Gastrocnemius medialis (tissue), 4 donors: ENCODE measurements at regions of chr4 and their contacts with region 1.

Region 1: GRCh38 chr4:1346781-1347409 is at the start of gene UVSSA:
- DNase-seq: peak; percentile 100
- ATAC-seq: peak; percentile 86 to 88
- H3K4me3 ChIP-seq: peak within 1 kb of the TSS; percentile 76 to 98 (median 88)
- H3K27ac ChIP-seq: peak within 1 kb of the TSS; percentile 88 to 99 (median 97)
- H3K4me1 ChIP-seq: peaks cover 20 to 31% of the 10 kb centered on the region in 2 donors
- H3K27me3 ChIP-seq: no peaks in the 10 kb centered on the region
- CTCF ChIP-seq: peak in 1 of 5 experiments; percentile 16
- POLR2A ChIP-seq: peak; percentile 92 to 97
- total RNA-seq, gene UVSSA: 8.5 to 13.2 (median 12.3) TPM

Region 2: DNA sequence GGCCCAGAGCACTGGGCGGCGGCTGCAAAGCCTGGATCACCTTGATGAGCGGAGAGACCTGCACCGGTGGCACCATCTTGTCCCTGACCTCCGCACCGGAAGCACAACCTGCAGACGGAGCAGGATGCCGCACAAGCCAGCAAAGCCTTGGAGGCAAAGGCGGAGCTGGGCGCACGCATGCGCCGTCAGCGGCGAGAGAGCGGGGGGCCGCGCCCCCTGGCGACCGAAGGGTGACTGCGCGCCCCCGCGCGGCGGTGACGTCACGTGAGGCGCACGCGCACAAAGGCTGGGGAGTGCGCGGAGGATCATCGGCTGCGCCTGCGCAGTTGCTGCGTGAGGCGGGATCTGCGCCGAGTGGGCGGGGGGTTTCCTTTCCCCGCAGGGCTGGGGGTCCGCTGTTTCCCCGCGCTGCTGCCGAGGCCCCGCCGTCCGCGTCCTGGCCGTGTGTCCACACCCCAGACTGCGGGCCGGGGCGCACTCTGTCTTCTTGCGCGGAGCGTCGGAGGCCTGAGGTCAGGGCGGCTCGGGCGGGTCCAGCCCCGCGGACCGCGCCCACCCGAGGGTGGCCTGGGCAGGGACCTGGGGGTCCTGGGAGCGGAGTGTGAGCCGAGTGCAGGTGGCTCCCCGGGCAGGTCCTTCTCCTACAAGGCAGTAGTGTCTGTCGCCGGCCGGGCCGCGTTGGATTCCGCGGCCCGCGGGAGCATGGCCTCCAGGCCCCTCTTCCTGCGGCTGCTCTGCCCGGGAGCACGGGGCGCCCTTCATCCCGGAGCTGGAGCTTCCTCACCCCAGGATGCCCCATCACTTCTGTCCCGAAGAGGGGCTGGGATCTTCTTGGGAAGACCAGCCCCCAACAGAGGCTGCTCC is 672.5 kb before region 1 on chr4 and contains the starts of genes ATP5ME and MYL5:
- in situ Hi-C with region 1: no loop called
- intact Hi-C with region 1: loop called (anchors 1 kb)
- DNase-seq: peak; percentile 94 to 96
- ATAC-seq: peak; percentile 91 to 94
- H3K4me3 ChIP-seq: peak within 1 kb of the TSS; percentile 88 to 99 (median 98)
- H3K27ac ChIP-seq: peak within 1 kb of the TSS; percentile 90 to 99 (median 97)
- H3K4me1 ChIP-seq: peaks cover 31 to 48% of the 10 kb centered on the region in 2 donors
- H3K27me3 ChIP-seq: peaks cover 0 to 5% (median 0%) of the 10 kb centered on the region in 3 donors
- CTCF ChIP-seq: peak; percentile 79 to 97 (median 88)
- POLR2A ChIP-seq: peak; percentile 79 to 93
- total RNA-seq, gene ATP5ME: 24.7 to 172 (median 91.5) TPM
- total RNA-seq, gene MYL5: 1.3 to 20.3 (median 3.6) TPM

Region 3: DNA sequence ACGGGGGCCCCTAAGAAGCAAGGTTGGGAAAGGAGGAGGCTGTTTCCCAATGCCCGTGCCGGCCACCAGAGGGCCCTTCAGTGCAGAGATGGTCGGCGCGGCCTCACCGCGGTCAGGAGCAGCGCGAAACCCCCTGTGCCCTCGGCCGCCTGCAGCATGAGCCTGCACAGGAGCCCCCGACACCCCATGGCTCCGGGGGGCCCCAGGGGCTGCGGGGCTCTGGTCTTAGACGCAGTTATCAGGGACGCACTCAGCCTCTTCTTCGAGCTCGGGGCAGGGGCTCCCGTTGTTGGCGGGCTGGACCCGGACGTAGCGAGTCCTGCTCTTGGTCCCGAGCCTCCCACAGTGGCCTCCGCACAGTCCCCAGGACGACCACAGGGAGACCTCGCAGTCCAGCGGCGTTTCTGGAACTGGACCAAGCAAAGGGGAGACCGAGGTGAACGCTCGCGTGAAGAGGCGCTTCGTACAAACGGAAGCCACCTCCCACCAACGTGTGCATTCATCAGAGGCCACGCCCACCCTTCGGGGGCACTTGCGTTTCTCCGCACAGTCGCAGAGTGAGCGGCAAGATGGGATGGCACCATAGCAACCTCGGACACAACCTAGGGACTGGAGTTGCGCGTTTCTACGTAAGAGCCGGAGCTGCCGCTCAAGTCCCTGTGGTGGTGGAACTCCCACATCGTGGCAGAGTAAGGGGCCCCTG is 179.5 kb before region 1 on chr4:
- in situ Hi-C with region 1: no loop called
- intact Hi-C with region 1: loop called (anchors 5 kb)
- DNase-seq: peak; percentile 52 to 70
- ATAC-seq: peak; percentile 78 to 82
- H3K4me3 ChIP-seq: peak overlapping the region; percentile 53 to 74 (median 62)
- H3K27ac ChIP-seq: peak overlapping the region in 1 of 4 donors; percentile 16
- H3K4me1 ChIP-seq: peaks cover 12 to 17% of the 10 kb centered on the region in 2 donors
- H3K27me3 ChIP-seq: peaks cover 4 to 21% (median 9%) of the 10 kb centered on the region in 3 donors
- CTCF ChIP-seq: peak; percentile 90 to 94 (median 93)
- POLR2A ChIP-seq: no peak

Region 4: GRCh38 chr4:1289207-1290164 is 57.4 kb before region 1 on chr4 and contains the start of gene MAEA:
- in situ Hi-C with region 1: no loop called
- intact Hi-C with region 1: loop called (anchors 1 kb)
- DNase-seq: peak; percentile 95 to 96
- ATAC-seq: peak; percentile 95 to 98
- H3K4me3 ChIP-seq: peak within 1 kb of the TSS; percentile 78 to 89 (median 84)
- H3K27ac ChIP-seq: peak within 1 kb of the TSS; percentile 84 to 93 (median 88)
- H3K4me1 ChIP-seq: peaks cover 38 to 44% of the 10 kb centered on the region in 2 donors
- H3K27me3 ChIP-seq: no peaks in the 10 kb centered on the region
- CTCF ChIP-seq: no peak
- POLR2A ChIP-seq: peak; percentile 74 to 88
- total RNA-seq, gene MAEA: 30.0 to 42.7 (median 34.3) TPM

Region 5: DNA sequence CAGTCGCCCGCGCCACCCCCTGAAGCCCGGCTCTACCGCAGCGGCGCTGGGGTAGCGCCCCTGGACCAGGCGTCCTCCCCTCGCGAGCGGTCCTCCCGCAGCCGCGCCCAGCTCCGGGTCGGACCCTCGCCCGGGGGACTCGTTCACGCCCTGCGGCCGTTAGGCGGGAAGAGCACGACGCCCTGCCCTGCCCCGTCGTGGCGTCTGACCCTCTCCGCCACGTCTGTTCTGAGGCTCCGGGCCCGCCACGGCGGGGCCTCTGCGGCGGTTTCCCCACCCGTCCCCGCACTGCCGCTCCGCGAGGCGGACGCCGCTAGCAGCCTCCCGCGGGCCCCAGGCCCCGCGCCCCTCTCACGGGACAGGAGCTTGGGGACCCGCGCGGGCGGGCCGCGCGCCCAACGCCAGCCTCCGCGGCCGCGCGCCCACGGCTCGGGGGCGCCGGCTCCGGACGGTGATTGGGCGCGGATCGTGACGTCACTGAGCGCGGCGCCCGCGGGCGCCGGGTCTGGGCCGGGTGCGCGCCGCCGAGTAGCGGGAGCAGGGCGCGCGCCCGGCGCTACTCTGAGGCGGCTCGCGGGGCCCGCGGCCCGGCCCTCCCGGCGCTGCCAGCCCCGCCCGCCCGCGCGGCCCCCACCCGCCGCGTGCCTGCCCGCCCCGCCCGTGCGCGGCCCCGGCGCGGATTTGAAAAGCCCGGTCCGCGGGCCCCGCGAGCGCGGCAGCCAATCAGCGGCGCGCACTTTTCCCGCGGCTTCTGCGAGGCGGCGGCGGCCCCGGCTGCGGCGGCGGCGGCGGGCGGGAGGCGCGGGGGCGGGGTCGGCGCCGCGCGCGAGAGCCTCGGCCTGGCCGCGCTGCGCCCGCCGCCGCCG is 523.9 kb after region 1 on chr4 and contains the start of gene NSD2:
- in situ Hi-C with region 1: no loop called
- intact Hi-C with region 1: loop called (anchors 5 kb)
- DNase-seq: peak; percentile 78 to 79
- ATAC-seq: peak; percentile 84
- H3K4me3 ChIP-seq: peak within 1 kb of the TSS; percentile 68 to 91 (median 84)
- H3K27ac ChIP-seq: peak within 1 kb of the TSS; percentile 87 to 96 (median 91)
- H3K4me1 ChIP-seq: peaks cover 16 to 23% of the 10 kb centered on the region in 2 donors
- H3K27me3 ChIP-seq: peaks cover 2 to 9% (median 6%) of the 10 kb centered on the region in 3 donors
- CTCF ChIP-seq: peak in 1 of 5 experiments; percentile 12
- POLR2A ChIP-seq: peak; percentile 69 to 73
- total RNA-seq, gene NSD2: 14.8 to 21.3 (median 16.8) TPM